Transverse colon (tissue), 4 donors: ENCODE measurements at regions of chr4 and their contacts with region 1.

Region 1: DNA sequence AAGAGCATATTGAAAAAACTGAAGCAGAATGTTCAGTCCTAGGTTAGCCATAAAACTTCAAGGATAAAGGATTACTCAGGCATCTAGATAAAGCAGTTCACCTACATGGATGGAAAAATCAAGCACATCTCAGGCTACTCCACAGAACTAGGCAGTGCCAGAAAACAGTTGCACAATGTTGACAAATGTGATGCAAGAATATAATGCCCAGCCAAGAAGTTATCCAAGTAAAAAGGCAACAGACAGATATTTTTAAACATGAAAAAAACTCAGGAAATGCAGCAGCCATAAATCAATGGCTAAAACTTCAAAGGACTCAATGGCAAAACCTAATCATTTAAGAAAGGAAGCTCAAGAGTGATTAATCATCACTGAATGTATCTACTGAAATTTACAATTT is 456.0 kb upstream of the FAM241A start:
- DNase-seq: no peak
- H3K4me3 ChIP-seq: no peak overlapping the region
- H3K27ac ChIP-seq: peak overlapping the region in 2 of 4 donors; percentile 16 to 49
- H3K4me1 ChIP-seq: peaks cover 0 to 6% (median 0%) of the 10 kb centered on the region in 4 donors
- H3K27me3 ChIP-seq: no peaks in the 10 kb centered on the region
- CTCF ChIP-seq: no peak
- EP300 ChIP-seq: no peak
- POLR2A ChIP-seq: no peak

Region 2: GRCh38 chr4:111778543-111778942 is 89.3 kb after region 1 on chr4:
- in situ Hi-C with region 1: loop called in 1 of 4 experiments (anchors 25 kb)
- intact Hi-C with region 1: no loop called
- DNase-seq: no peak
- H3K4me3 ChIP-seq: no peak overlapping the region
- H3K27ac ChIP-seq: no peak overlapping the region
- H3K4me1 ChIP-seq: peaks cover 0 to 6% (median 0%) of the 10 kb centered on the region in 4 donors
- H3K27me3 ChIP-seq: no peaks in the 10 kb centered on the region
- CTCF ChIP-seq: peak in 1 of 5 experiments; percentile 10
- EP300 ChIP-seq: no peak
- POLR2A ChIP-seq: no peak